ENCODE measurements at regions of chr12 and their contacts with region 1.

Region 1: DNA sequence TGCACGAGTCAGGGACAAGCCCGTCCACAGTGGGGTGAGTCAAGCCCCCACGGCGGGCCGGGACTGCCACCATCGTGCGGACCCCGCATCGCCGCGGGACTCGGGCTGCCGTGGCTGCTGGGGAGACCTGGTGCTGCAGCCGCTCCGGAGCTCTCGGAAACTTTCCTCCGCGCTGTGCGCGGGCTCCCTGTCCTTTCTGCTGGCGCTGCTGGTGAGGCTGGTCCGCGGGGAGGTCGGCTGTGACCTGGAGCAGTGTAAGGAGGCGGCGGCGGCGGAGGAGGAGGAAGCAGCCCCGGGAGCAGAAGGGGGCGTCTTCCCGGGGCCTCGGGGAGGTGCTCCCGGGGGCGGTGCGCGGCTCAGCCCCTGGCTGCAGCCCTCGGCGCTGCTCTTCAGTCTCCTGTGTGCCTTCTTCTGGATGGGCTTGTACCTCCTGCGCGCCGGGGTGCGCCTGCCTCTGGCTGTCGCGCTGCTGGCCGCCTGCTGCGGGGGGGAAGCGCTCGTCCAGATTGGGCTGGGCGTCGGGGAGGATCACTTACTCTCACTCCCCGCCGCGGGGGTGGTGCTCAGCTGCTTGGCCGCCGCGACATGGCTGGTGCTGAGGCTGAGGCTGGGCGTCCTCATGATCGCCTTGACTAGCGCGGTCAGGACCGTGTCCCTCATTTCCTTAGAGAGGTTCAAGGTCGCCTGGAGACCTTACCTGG is 1.1 kb downstream of the PDE3A start:
- DNase-seq: peak; percentile 87 to 95 (median 94)
- ATAC-seq: peak; percentile 87
- H3K4me3 ChIP-seq: peak overlapping the region; percentile 58
- H3K27ac ChIP-seq: peak overlapping the region; percentile 90
- H3K4me1 ChIP-seq: no peaks in the 10 kb centered on the region
- H3K27me3 ChIP-seq: no peaks in the 10 kb centered on the region

Region 2: DNA sequence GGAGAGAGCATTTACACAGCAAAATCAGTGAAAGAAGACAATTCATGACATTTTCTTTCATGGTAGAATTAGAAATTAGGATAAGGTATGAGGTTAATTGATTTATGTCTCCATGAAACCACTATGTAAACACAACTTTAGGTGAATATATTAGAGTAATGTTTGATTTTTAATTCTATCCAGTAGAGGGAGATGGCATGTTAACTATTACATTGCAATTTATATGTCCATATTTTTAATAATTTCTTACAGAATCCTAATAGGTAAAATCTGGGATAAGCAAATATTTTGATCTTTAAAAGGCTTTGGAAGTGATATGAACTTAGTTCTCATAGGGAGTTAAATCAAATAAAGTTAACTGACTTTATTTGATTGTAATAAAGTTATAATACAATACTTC is 374.5 kb before region 1 on chr12:
- intact Hi-C with region 1: loop called in 1 of 4 experiments (anchors 10 kb)
- DNase-seq: no peak
- ATAC-seq: no peak
- H3K4me3 ChIP-seq: no peak overlapping the region
- H3K27ac ChIP-seq: no peak overlapping the region
- H3K4me1 ChIP-seq: no peaks in the 10 kb centered on the region
- H3K27me3 ChIP-seq: no peaks in the 10 kb centered on the region

Region 3: DNA sequence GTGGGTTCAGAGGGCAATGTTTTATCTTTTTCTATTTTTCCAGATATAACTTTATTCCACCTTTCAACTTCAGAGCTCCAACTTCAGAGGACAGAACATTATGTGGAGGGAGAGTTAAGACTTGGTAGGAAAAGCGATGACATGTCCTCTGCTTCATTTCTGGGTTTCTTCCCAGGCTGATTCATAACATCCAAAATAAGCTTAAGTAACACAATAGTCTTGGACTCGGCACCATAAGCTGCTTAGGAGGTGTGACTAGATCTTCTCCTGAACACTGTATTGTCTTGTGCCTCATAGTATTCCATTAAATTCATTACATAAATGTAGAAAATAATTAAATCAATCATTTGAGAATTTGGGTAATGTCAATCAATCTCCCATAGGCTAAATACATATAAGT is 96.7 kb before region 1 on chr12:
- intact Hi-C with region 1: loop called in 1 of 4 experiments (anchors 10 kb)
- DNase-seq: no peak
- ATAC-seq: peak; percentile 86 to 87
- H3K4me3 ChIP-seq: no peak overlapping the region
- H3K27ac ChIP-seq: peak overlapping the region; percentile 37
- H3K4me1 ChIP-seq: peaks cover 4% of the 10 kb centered on the region
- H3K27me3 ChIP-seq: no peaks in the 10 kb centered on the region

Measured in right cardiac atrium (tissue), 5 donors.